Head of caudate nucleus (tissue), 42 donors: ENCODE measurements at regions of chr3 and their contacts with region 1.

Region 1: GRCh38 chr3:183766745-183767606 is 58.4 kb downstream of the MAP6D1 start:
- DNase-seq: peak; percentile 43 to 94 (median 82)

Region 2: DNA sequence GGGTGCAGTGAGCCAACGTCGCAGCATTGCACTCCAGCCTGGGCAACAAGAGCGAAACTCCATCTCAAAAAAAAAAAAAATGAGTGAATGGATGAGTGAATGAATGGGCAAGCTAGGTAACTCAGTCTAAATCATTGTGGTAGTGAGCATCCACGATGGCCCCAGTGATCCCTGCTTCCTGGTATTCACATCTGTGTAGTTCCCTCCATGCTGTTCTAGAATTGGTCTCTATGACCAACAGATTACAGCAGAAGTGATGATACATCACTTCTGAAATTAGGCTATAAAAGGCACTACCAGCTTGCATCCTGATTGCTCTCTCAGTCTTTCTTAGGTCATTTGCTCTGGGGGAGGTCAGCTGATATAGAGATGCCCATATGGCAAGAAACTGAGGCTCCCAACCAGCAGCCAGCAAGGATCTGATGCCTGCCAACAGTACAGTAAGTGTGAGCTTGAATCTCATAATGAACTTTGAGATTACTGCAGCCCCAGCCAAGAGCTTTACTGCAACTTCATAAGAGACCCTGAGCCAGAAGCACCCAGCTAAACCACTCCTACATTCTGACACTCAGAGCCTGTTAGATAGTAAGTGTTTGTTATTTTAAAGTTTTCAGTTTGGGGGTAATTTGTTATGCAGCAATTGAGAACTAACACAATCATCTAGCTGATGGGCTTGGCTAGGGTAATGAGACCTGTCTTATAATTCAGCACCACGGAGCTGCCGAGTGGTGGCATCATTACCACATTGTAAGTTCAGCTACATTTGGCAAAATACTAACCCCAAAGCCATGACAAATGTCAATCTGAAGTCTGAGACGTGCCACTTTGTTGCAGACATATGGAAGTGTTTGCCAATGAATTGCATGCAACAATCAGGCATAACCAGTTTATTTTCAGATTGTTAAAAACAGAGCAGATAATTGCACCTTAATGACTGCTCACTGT is 264.5 kb before region 1 on chr3:
- intact Hi-C with region 1: loop called (anchors 5 kb)
- DNase-seq: peak; percentile 21 to 86 (median 67)

Region 3: GRCh38 chr3:183714622-183715021 is 52.4 kb before region 1 on chr3:
- intact Hi-C with region 1: no loop called
- DNase-seq: no peak

Region 4: DNA sequence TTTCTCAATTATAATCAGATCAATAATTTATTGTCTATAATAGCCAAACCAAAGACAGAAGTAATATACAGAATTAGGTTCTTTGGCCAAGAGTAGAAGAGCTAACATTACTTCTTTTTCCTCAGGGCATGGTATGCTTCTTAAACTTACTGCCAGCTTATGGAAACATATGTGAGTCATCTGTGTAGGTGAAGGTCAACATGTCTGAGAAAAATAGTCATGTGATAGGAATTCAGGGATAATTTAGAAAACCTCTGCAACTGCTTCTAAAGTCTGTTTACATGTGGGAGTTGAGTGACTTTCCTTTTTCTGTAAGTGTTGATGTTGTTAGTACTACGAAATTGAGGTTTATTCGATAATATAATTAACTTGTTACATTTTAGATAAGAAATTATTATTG is 77.6 kb after region 1 on chr3:
- intact Hi-C with region 1: no loop called
- DNase-seq: no peak

Region 5: GRCh38 chr3:183884427-183885296 is 117.7 kb after region 1 on chr3 and contains the start of gene PARL:
- intact Hi-C with region 1: loop called (anchors 5 kb)
- DNase-seq: peak; percentile 93 to 99 (median 98)